SK-N-SH (cell line): ENCODE measurements at regions of chr6 and their contacts with region 1.

Region 1: GRCh38 chr6:111210194-111210728 is 123.0 kb downstream of the SLC16A10 start:
- DNase-seq: peak; percentile 61
- H3K4me3 ChIP-seq: no peak overlapping the region
- H3K27ac ChIP-seq: no peak overlapping the region
- H3K4me1 ChIP-seq: no peaks in the 10 kb centered on the region
- H3K27me3 ChIP-seq: no peaks in the 10 kb centered on the region
- CTCF ChIP-seq: peak; percentile 81
- EP300 ChIP-seq: no peak
- RAD21 ChIP-seq: peak; percentile 92

Region 2: DNA sequence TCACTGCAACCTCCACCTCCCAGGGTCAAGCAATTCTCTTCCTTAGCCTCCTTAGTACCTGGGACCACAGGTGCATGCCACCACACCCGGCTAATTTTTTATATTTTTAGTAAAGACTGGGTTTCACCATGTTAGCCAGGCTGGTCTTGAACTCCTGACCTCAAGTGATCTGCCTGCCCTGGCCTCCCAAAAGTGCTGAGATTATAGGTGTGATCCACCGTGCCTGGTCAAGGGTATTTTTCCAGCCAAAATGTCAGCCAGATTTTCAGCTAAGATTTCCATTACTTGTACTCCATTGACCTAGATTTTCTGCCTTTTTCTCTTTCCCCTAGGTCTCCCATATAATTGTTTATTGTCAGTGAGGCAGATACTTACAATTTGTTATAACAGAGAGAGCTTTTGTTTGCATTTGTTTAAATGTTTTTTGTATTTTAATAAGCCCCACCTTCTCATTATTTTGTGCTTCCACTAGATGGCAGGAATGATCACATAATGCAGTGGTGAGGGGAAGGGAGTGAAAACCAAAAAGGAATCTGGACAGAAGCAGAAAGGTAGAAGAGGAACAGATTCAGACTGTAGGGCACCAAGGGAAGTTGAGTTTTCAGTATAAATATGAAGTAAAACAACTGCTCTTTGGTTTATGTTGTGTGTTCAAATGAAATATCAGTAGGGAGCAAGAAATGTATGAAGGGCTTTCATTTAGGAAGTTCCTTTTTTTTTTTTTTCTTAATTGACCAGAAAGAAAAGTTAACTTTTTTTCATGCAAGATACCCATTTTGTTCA is 198.7 kb before region 1 on chr6:
- CTCF ChIA-PET with region 1: interaction called, 76 read pairs
- POLR2A ChIA-PET with region 1: no interaction called
- DNase-seq: peak; percentile 64
- H3K4me3 ChIP-seq: peak overlapping the region in 1 of 2 experiments; percentile 23; a peak in 1 of 4 replicates
- H3K27ac ChIP-seq: no peak overlapping the region
- H3K4me1 ChIP-seq: no peaks in the 10 kb centered on the region
- H3K27me3 ChIP-seq: no peaks in the 10 kb centered on the region
- CTCF ChIP-seq: peak; percentile 82
- EP300 ChIP-seq: no peak
- RAD21 ChIP-seq: peak; percentile 80

Region 3: DNA sequence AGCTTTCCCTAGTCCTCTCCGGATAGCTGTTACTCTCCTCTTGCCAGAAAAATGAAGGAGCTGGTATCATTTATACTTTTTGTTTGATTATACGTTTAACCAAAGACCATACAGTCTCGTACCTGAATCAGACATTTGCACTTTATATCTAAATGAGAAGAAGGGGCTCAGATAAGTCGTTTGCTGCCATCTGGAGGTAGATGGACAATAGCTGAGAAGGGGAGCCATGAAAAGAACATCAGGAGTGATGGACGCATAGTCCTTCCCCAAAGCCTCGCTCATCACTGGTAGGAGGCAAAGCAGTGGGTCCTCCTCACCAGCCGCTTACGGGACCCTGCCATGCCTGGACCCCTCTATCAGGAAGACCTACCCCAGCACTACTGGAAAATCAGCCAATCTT is 183.0 kb before region 1 on chr6:
- CTCF ChIA-PET with region 1: interaction called, 16 read pairs
- POLR2A ChIA-PET with region 1: no interaction called
- DNase-seq: no peak
- H3K4me3 ChIP-seq: no peak overlapping the region
- H3K27ac ChIP-seq: no peak overlapping the region
- H3K4me1 ChIP-seq: peaks cover 0 to 3% of the 10 kb centered on the region in 2 experiments; a peak in 1 of 4 replicates
- H3K27me3 ChIP-seq: no peaks in the 10 kb centered on the region
- CTCF ChIP-seq: no peak
- EP300 ChIP-seq: no peak
- RAD21 ChIP-seq: no peak

Region 4: DNA sequence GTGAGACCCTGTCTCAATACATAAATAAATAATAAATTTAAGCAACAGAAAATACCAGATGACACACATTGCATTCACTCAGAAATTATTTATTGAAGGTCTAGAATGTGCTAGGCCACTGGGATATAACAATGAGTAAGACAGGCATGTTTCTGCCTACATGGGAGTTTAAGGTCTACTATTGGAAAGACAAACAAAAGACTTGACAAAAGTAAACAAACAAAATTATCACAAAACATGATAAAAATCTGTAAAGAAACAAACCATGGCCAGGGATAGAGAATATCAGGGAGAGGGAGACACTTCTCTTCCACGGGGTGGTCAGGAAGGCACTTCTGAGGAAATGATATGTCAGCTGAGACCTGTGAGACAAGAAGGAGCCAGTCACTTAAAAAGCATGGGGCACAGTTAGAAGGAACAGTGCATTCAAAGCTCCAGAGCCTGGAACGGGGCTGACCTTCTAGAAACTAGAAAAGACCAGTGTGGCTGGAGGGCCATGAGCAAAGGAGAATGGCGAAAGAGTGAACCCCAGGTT is 158.2 kb before region 1 on chr6:
- CTCF ChIA-PET with region 1: interaction called, 108 read pairs
- POLR2A ChIA-PET with region 1: no interaction called
- DNase-seq: no peak
- H3K4me3 ChIP-seq: no peak overlapping the region
- H3K27ac ChIP-seq: no peak overlapping the region
- H3K4me1 ChIP-seq: no peaks in the 10 kb centered on the region; a peak in 1 of 4 replicates
- H3K27me3 ChIP-seq: no peaks in the 10 kb centered on the region
- CTCF ChIP-seq: no peak
- EP300 ChIP-seq: no peak
- RAD21 ChIP-seq: no peak

Region 5: DNA sequence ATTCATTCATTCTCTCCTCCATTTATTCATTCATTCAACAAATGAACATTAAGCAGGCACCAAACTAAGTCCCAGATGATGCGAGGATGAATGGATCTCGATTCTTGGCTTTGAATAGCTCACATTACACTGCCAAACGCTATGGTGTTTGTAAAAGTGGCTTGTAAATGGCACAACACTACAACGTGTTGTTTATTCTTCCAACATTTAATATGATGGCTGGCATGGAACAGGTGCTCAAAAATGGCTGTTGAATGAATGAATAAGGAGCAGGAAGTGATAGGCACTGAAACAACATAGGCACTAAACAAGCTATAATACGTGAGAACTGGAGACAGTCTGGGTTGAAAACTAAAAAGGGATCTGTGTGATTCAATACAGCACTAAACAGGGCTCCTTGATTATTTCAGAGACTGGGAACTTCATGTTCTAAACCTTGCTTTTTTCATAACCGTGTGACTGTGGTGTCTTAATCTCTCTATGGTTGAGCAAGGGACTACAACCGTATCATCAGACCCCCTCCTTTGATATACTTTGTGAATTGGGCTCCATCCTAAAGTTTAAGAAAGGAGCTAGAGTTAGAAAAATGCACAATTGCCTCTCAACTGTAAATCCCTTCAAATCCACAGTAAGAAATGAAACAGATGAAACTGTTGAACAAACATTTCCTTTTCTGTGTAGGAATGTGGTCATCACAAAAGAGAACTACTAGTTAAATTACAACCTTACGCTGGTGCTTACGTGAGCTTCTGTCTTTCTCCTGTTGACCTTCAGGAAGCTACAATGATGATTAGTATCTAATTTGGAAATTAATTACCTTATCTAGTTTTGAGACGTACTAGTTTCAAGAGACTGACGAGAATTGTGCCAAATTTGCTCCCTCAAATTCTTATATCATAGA is 139.9 kb before region 1 on chr6:
- CTCF ChIA-PET with region 1: interaction called, 11 read pairs
- POLR2A ChIA-PET with region 1: interaction called, 4 read pairs
- DNase-seq: no peak
- H3K4me3 ChIP-seq: no peak overlapping the region
- H3K27ac ChIP-seq: no peak overlapping the region
- H3K4me1 ChIP-seq: peaks cover 0 to 2% of the 10 kb centered on the region in 2 experiments; a peak in 2 of 4 replicates
- H3K27me3 ChIP-seq: no peaks in the 10 kb centered on the region; the same call in 1 of the 2 replicates
- CTCF ChIP-seq: no peak
- EP300 ChIP-seq: no peak
- RAD21 ChIP-seq: no peak

Region 6: GRCh38 chr6:111183702-111184517 is 26.4 kb before region 1 on chr6:
- CTCF ChIA-PET with region 1: interaction called, 11 read pairs
- POLR2A ChIA-PET with region 1: no interaction called
- DNase-seq: no peak
- H3K4me3 ChIP-seq: no peak overlapping the region
- H3K27ac ChIP-seq: no peak overlapping the region
- H3K4me1 ChIP-seq: no peaks in the 10 kb centered on the region
- H3K27me3 ChIP-seq: no peaks in the 10 kb centered on the region
- CTCF ChIP-seq: no peak
- EP300 ChIP-seq: no peak
- RAD21 ChIP-seq: no peak

Region 7: DNA sequence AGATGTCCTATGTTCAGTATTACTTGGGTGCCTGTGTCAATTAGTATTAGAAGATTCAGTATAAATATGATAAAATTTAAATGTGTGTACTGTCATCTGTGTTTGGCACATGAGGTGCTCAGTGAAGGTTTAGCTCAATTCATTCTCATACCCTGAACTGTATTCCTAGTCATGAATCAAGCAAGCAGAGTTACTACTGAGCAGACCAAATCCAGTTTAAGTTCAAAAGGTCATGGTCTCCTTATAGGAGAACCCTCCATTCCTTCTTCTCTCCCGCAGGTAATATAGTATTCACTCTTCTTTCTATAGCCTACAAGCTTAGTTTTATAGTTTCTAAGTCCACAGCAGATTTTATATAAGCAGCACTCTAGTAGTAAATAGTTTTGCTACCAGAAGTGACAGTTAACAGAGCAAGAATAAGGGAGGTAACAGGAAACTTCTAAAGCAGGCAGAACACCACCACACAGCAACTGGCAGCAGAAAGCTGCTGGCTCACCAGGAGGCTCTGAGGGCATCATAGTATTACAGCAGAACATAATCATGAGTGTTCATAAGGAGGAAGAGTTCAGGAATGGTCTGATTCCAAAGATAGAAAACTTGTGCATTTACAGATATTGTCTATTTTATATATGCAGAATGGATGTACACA is 10.2 kb after region 1 on chr6:
- CTCF ChIA-PET with region 1: interaction called, 19 read pairs
- POLR2A ChIA-PET with region 1: no interaction called
- DNase-seq: no peak
- H3K4me3 ChIP-seq: no peak overlapping the region
- H3K27ac ChIP-seq: no peak overlapping the region
- H3K4me1 ChIP-seq: peaks cover 0 to 2% of the 10 kb centered on the region in 2 experiments; a peak in 1 of 4 replicates
- H3K27me3 ChIP-seq: no peaks in the 10 kb centered on the region
- CTCF ChIP-seq: no peak
- EP300 ChIP-seq: no peak
- RAD21 ChIP-seq: no peak